ENCODE measurements at regions of chr15 and their contacts with region 1.

Region 1: DNA sequence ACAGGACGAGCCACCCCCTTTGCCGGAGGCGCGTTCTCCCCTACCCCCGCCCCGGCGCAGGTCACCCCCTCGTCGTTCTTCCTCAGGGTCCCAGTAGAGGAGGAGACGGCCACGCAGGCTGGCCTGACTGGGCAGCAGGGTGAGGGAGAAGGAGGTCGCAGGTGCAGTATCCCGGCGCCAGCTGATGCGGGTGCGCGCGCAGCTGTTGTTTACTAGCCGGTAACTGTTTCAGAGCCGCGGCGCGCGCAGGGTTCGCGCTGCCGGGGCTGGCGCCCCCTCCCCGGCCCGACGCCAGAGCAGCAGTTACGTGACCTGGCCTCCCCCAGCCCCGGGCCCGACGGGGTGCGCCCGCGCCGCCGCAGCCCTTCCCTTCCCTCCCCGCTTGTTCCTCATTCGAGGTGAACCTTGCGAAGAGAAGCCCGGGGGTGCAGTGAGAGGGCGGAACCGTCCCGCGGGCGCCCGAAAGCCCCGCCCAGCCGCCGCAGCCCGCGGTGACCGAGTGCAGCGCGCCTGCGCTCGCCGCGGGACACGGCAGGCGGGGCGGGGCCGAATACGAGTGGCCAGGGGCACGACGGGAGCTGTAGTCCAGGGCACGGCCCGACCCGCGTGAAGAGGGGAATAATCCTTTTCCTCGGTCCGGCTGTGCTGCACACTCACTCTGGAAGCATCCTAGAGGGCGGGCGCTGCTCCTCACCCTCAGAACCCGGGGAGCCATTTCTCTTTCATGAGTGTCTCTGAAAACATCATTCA is at the start of gene SLC12A6:
- DNase-seq: peak; percentile 90 to 93 (median 92)
- ATAC-seq: peak; percentile 94
- H3K4me3 ChIP-seq: peak within 1 kb of the TSS; percentile 96
- H3K4me3 Mint-ChIP-seq: peak within 1 kb of the TSS; percentile 90 to 100 (median 98)
- H3K27ac ChIP-seq: peak within 1 kb of the TSS; percentile 92
- H3K27ac Mint-ChIP-seq: peak within 1 kb of the TSS; percentile 82 to 99 (median 98)
- H3K4me1 ChIP-seq: peaks cover 30 to 41% of the 10 kb centered on the region in 2 donors
- H3K4me1 Mint-ChIP-seq: peaks cover 35 to 72% (median 60%) of the 10 kb centered on the region in 7 donors
- H3K27me3 ChIP-seq: no peaks in the 10 kb centered on the region
- H3K27me3 Mint-ChIP-seq: no peaks in the 10 kb centered on the region
- total RNA-seq, gene SLC12A6: 39.2 to 122 (median 111) TPM

Region 2: GRCh38 chr15:34038023-34038870 is 299.5 kb before region 1 on chr15:
- CTCF ChIA-PET with region 1: no interaction called
- POLR2A ChIA-PET with region 1: interaction called, 3 read pairs
- intact Hi-C with region 1: loop called (anchors 2 to 5 kb)
- DNase-seq: peak; percentile 52 to 76 (median 72)
- ATAC-seq: peak; percentile 90
- H3K4me3 ChIP-seq: peak overlapping the region; percentile 100
- H3K4me3 Mint-ChIP-seq: peak overlapping the region; percentile 80 to 97 (median 94)
- H3K27ac ChIP-seq: peak overlapping the region; percentile 80
- H3K27ac Mint-ChIP-seq: peak overlapping the region; percentile 87 to 96 (median 94)
- H3K4me1 ChIP-seq: peaks cover 8 to 14% of the 10 kb centered on the region in 2 donors
- H3K4me1 Mint-ChIP-seq: peaks cover 12 to 25% (median 23%) of the 10 kb centered on the region in 7 donors
- H3K27me3 ChIP-seq: no peaks in the 10 kb centered on the region
- H3K27me3 Mint-ChIP-seq: no peaks in the 10 kb centered on the region

Region 3: DNA sequence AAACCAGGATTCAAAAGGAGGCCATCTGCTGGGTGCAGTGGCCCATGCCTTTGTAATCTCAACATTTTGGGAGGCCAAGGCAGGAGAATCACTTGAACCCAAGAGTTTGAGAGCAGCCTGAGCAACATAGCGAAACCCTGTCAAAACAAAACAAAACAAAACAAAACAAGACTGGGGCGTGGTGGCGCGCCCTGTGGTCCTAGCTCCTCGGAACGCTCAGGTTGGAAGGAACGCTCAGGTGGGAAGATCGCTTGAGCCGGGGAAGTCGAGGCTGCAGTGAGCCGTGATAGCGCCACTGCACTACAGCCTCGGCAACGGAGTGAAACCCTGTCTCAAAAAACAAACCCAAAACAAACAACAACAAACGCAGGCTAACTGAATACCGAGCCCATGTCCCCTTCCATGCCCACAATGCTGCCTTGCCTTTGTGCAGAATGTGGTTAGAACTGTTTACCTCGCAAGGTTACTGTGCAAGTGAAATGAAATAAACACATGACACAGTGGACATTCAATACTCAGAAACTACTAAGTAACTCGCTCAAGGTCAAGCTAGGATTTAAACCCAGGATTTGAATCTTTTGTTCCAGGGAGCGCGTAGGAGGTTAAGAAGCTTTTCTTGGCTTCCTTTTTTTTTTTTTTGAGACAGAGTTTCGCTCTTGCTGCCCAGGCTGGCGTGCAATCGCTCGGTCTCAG is 113.7 kb before region 1 on chr15:
- CTCF ChIA-PET with region 1: no interaction called
- POLR2A ChIA-PET with region 1: interaction called, 11 read pairs
- intact Hi-C with region 1: loop called in 1 of 2 experiments (anchors 1 kb)
- DNase-seq: no peak
- ATAC-seq: no peak
- H3K4me3 ChIP-seq: peak overlapping the region; percentile 82
- H3K4me3 Mint-ChIP-seq: peak overlapping the region; percentile 88 to 100 (median 94)
- H3K27ac ChIP-seq: peak overlapping the region; percentile 83
- H3K27ac Mint-ChIP-seq: peak overlapping the region; percentile 93 to 100 (median 99)
- H3K4me1 ChIP-seq: peaks cover 5 to 13% of the 10 kb centered on the region in 2 donors
- H3K4me1 Mint-ChIP-seq: peaks cover 9 to 35% (median 30%) of the 10 kb centered on the region in 7 donors
- H3K27me3 ChIP-seq: no peaks in the 10 kb centered on the region
- H3K27me3 Mint-ChIP-seq: peaks cover 0 to 5% (median 0%) of the 10 kb centered on the region in 5 donors

Region 4: GRCh38 chr15:34304613-34305012 is 33.1 kb before region 1 on chr15:
- CTCF ChIA-PET with region 1: no interaction called
- POLR2A ChIA-PET with region 1: interaction called, 19 read pairs
- intact Hi-C with region 1: no loop called
- DNase-seq: no peak
- ATAC-seq: no peak
- H3K4me3 ChIP-seq: no peak overlapping the region
- H3K4me3 Mint-ChIP-seq: peak overlapping the region in 2 of 10 donors; percentile 16 to 20
- H3K27ac ChIP-seq: no peak overlapping the region
- H3K27ac Mint-ChIP-seq: peak overlapping the region in 2 of 9 donors; percentile 29 to 55
- H3K4me1 ChIP-seq: peaks cover 0 to 7% of the 10 kb centered on the region in 2 donors
- H3K4me1 Mint-ChIP-seq: peaks cover 15 to 97% (median 79%) of the 10 kb centered on the region in 7 donors
- H3K27me3 ChIP-seq: no peaks in the 10 kb centered on the region
- H3K27me3 Mint-ChIP-seq: no peaks in the 10 kb centered on the region

Region 5: GRCh38 chr15:34490417-34491193 is 152.9 kb after region 1 on chr15:
- CTCF ChIA-PET with region 1: no interaction called
- POLR2A ChIA-PET with region 1: no interaction called
- intact Hi-C with region 1: loop called in 1 of 2 experiments (anchors 10 kb)
- DNase-seq: no peak
- ATAC-seq: no peak
- H3K4me3 ChIP-seq: no peak overlapping the region
- H3K4me3 Mint-ChIP-seq: peak overlapping the region in 4 of 10 donors; percentile 6 to 32 (median 18)
- H3K27ac ChIP-seq: no peak overlapping the region
- H3K27ac Mint-ChIP-seq: no peak overlapping the region
- H3K4me1 ChIP-seq: no peaks in the 10 kb centered on the region
- H3K4me1 Mint-ChIP-seq: peaks cover 0 to 10% (median 6%) of the 10 kb centered on the region in 7 donors
- H3K27me3 ChIP-seq: peaks cover 0 to 9% of the 10 kb centered on the region in 2 donors
- H3K27me3 Mint-ChIP-seq: peaks cover 65 to 84% (median 78%) of the 10 kb centered on the region in 5 donors

Region 6: DNA sequence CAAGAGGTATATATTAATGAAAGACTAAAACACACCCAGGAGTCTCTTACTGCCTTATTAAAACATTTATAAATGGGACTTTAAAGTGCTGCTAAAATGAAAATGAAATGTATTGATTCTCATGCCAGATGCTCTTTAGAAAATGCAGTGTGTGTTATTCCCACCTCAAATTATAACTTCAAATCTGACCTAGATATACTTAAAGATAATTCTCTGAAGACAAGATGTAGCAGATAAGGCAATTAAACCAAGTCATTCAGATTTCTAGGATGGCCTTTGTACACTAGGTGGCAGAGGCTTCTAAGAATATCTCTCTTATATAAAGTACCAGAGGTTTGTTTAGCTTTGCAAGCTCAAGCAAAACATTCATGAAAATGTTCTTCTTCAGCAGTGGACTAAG is 272.6 kb after region 1 on chr15:
- CTCF ChIA-PET with region 1: no interaction called
- POLR2A ChIA-PET with region 1: no interaction called
- intact Hi-C with region 1: no loop called
- DNase-seq: peak in 5 of 9 donors; percentile 12 to 21 (median 14)
- ATAC-seq: no peak
- H3K4me3 ChIP-seq: no peak overlapping the region
- H3K4me3 Mint-ChIP-seq: peak overlapping the region in 8 of 10 donors; percentile 31 to 70 (median 52)
- H3K27ac ChIP-seq: no peak overlapping the region
- H3K27ac Mint-ChIP-seq: peak overlapping the region in 5 of 9 donors; percentile 3 to 70 (median 47)
- H3K4me1 ChIP-seq: no peaks in the 10 kb centered on the region
- H3K4me1 Mint-ChIP-seq: peaks cover 4 to 21% (median 16%) of the 10 kb centered on the region in 7 donors
- H3K27me3 ChIP-seq: no peaks in the 10 kb centered on the region
- H3K27me3 Mint-ChIP-seq: peaks cover 8 to 65% (median 10%) of the 10 kb centered on the region in 5 donors